Common myeloid progenitor, CD34-positive (primary cell): ENCODE measurements at regions of chr11 and their contacts with region 1.

Region 1: DNA sequence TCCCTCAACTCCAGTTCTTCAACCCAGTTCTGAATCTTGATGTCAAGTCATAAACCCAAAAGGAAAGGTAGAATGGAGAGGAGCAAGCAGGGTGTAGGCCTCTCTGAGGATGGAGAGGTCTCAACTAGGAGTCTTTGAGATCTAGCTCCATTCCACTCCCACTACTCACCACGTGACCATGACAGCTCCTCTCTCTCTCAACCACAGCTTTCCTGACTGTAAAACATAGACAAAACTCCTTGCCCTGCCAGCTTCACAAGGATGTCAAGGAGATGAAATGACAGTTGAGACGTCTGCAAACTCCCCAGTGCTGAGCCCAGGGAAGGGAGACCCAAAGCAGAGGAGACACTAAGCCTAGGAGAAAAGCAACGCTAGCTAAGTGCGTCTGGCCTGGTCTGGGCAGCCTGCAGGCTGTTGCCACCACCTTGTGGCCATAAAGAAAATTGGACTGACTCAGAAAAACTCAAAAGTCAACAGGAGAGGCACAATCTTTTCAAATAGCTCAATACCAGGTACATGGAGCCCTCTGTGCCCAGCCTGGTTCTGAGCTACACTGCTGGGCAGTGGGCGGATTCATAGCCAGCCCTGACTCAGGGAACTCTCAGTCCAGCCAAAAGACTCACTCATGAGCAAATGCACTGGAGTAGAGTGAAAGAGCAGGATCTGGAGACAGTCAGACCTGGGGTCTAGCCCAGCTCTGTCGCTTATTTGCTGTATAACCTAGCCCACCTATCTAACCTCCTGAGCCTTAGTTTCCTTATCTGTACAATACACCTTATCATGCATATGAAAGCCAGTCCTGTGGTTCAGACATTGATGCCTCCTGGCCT is 3.4 kb downstream of the CLPB start:
- DNase-seq: peak; percentile 53 to 79 (median 78)
- H3K4me3 ChIP-seq: peak overlapping the region in 2 of 7 experiments; percentile 17 to 21
- H3K27ac ChIP-seq: peak overlapping the region in 1 of 2 experiments; percentile 15
- H3K4me1 ChIP-seq: peaks cover 1 to 44% (median 31%) of the 10 kb centered on the region in 4 experiments
- H3K27me3 ChIP-seq: no peaks in the 10 kb centered on the region

Region 2: GRCh38 chr11:72091005-72091691 is 339.8 kb before region 1 on chr11:
- CTCF ChIA-PET with region 1: interaction called, 18 read pairs
- POLR2A ChIA-PET with region 1: no interaction called
- DNase-seq: peak; percentile 86 to 93 (median 91)
- H3K4me3 ChIP-seq: peak overlapping the region in 1 of 7 experiments; percentile 14
- H3K27ac ChIP-seq: peak overlapping the region in 1 of 2 experiments; percentile 30
- H3K4me1 ChIP-seq: peaks cover 0 to 18% (median 13%) of the 10 kb centered on the region in 4 experiments
- H3K27me3 ChIP-seq: no peaks in the 10 kb centered on the region

Region 3: GRCh38 chr11:72287293-72287692 is 143.7 kb before region 1 on chr11:
- CTCF ChIA-PET with region 1: interaction called, 20 read pairs
- POLR2A ChIA-PET with region 1: no interaction called
- DNase-seq: no peak
- H3K4me3 ChIP-seq: no peak overlapping the region
- H3K27ac ChIP-seq: no peak overlapping the region
- H3K4me1 ChIP-seq: no peaks in the 10 kb centered on the region
- H3K27me3 ChIP-seq: peaks cover 0 to 11% (median 0%) of the 10 kb centered on the region in 5 experiments

Region 4: GRCh38 chr11:72328366-72329224 is 102.4 kb before region 1 on chr11:
- CTCF ChIA-PET with region 1: interaction called, 44 read pairs
- POLR2A ChIA-PET with region 1: interaction called, 3 read pairs
- DNase-seq: no peak
- H3K4me3 ChIP-seq: no peak overlapping the region
- H3K27ac ChIP-seq: no peak overlapping the region
- H3K4me1 ChIP-seq: peaks cover 0 to 28% (median 9%) of the 10 kb centered on the region in 4 experiments
- H3K27me3 ChIP-seq: no peaks in the 10 kb centered on the region

Region 5: GRCh38 chr11:72406540-72407527 is 24.1 kb before region 1 on chr11:
- CTCF ChIA-PET with region 1: interaction called, 23 read pairs
- POLR2A ChIA-PET with region 1: interaction called, 4 read pairs
- DNase-seq: no peak
- H3K4me3 ChIP-seq: no peak overlapping the region
- H3K27ac ChIP-seq: no peak overlapping the region
- H3K4me1 ChIP-seq: peaks cover 14 to 29% (median 23%) of the 10 kb centered on the region in 4 experiments
- H3K27me3 ChIP-seq: no peaks in the 10 kb centered on the region

Region 6: GRCh38 chr11:72446902-72447769 is 16.2 kb after region 1 on chr11:
- CTCF ChIA-PET with region 1: interaction called, 28 read pairs
- POLR2A ChIA-PET with region 1: no interaction called
- DNase-seq: peak; percentile 75 to 85 (median 85)
- H3K4me3 ChIP-seq: no peak overlapping the region
- H3K27ac ChIP-seq: no peak overlapping the region
- H3K4me1 ChIP-seq: peaks cover 0 to 6% (median 2%) of the 10 kb centered on the region in 4 experiments
- H3K27me3 ChIP-seq: peaks cover 0 to 2% (median 0%) of the 10 kb centered on the region in 5 experiments

Region 7: GRCh38 chr11:72541257-72541974 is 110.5 kb after region 1 on chr11:
- CTCF ChIA-PET with region 1: no interaction called
- POLR2A ChIA-PET with region 1: no interaction called
- DNase-seq: no peak
- H3K4me3 ChIP-seq: no peak overlapping the region
- H3K27ac ChIP-seq: no peak overlapping the region
- H3K4me1 ChIP-seq: no peaks in the 10 kb centered on the region
- H3K27me3 ChIP-seq: peaks cover 0 to 5% (median 2%) of the 10 kb centered on the region in 5 experiments

Region 8: GRCh38 chr11:72595292-72595684 is 164.3 kb after region 1 on chr11:
- CTCF ChIA-PET with region 1: no interaction called
- POLR2A ChIA-PET with region 1: no interaction called
- DNase-seq: no peak
- H3K4me3 ChIP-seq: no peak overlapping the region
- H3K27ac ChIP-seq: no peak overlapping the region
- H3K4me1 ChIP-seq: peaks cover 0 to 5% (median 4%) of the 10 kb centered on the region in 4 experiments
- H3K27me3 ChIP-seq: peaks cover 0 to 34% (median 17%) of the 10 kb centered on the region in 5 experiments

Region 9: GRCh38 chr11:72752088-72752914 is 321.3 kb after region 1 on chr11 and contains the start of gene ARAP1:
- CTCF ChIA-PET with region 1: no interaction called
- POLR2A ChIA-PET with region 1: no interaction called
- DNase-seq: peak; percentile 77 to 90 (median 86)
- H3K4me3 ChIP-seq: peak within 1 kb of the TSS; percentile 48 to 89 (median 78)
- H3K27ac ChIP-seq: peak within 1 kb of the TSS in 1 of 2 experiments; percentile 70
- H3K4me1 ChIP-seq: peaks cover 1 to 38% (median 28%) of the 10 kb centered on the region in 4 experiments
- H3K27me3 ChIP-seq: no peaks in the 10 kb centered on the region